IMR-90 (cell line): ENCODE measurements at regions of chr6 and their contacts with region 1.

Region 1: GRCh38 chr6:91081452-91082067 is 494.7 kb upstream of the MAP3K7 start:
- DNase-seq: peak; percentile 52
- ATAC-seq: peak; percentile 59; the same call in 1 of the 2 replicates
- H3K4me3 ChIP-seq: no peak overlapping the region
- H3K27ac ChIP-seq: no peak overlapping the region
- H3K4me1 ChIP-seq: peaks cover 2% of the 10 kb centered on the region; the same call in 1 of the 2 replicates
- H3K27me3 ChIP-seq: no peaks in the 10 kb centered on the region
- CTCF ChIP-seq: peak; percentile 68
- POLR2A ChIP-seq: no peak
- RAD21 ChIP-seq: peak; percentile 71

Region 2: GRCh38 chr6:90701146-90701781 is 380.3 kb before region 1 on chr6:
- CTCF ChIA-PET with region 1: no interaction called
- POLR2A ChIA-PET with region 1: no interaction called
- dilution Hi-C with region 1: no loop called
- in situ Hi-C with region 1: no loop called
- intact Hi-C with region 1: no loop called
- DNase-seq: no peak
- ATAC-seq: no peak
- H3K4me3 ChIP-seq: no peak overlapping the region
- H3K27ac ChIP-seq: no peak overlapping the region
- H3K4me1 ChIP-seq: no peaks in the 10 kb centered on the region
- H3K27me3 ChIP-seq: no peaks in the 10 kb centered on the region
- CTCF ChIP-seq: no peak
- POLR2A ChIP-seq: no peak
- RAD21 ChIP-seq: no peak

Region 3: GRCh38 chr6:90993770-90994169 is 87.8 kb before region 1 on chr6:
- CTCF ChIA-PET with region 1: no interaction called
- POLR2A ChIA-PET with region 1: no interaction called
- dilution Hi-C with region 1: no loop called
- in situ Hi-C with region 1: no loop called
- intact Hi-C with region 1: no loop called
- DNase-seq: no peak
- ATAC-seq: no peak
- H3K4me3 ChIP-seq: no peak overlapping the region
- H3K27ac ChIP-seq: no peak overlapping the region
- H3K4me1 ChIP-seq: no peaks in the 10 kb centered on the region
- H3K27me3 ChIP-seq: no peaks in the 10 kb centered on the region
- CTCF ChIP-seq: no peak
- POLR2A ChIP-seq: no peak
- RAD21 ChIP-seq: no peak

Region 4: DNA sequence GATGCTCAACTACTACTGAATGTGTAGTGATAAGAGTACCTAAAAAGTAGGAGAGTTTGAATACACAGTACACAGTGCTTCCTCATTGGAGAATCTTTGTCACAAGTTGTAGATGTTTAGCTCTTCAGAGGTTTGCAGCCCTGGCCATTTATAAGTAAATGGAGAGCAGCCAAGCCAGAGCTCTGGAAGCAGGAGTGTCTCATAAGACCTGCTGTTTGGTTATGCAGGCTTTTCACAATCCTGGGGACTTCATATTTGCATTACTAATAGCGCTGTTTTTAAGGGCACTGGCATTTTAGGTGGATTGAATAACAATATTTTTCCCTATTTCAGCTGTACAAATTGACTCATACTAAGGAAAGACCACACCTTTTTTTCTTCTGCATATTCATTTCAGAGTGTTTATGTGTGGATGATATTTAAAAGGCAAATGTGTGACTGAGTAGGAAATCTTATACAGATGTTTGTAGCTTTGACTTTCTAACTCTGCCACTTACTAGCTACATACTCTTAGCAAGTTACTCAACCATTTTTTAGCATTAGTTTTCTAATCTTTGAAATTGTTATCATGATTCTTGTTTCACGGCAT is 235.8 kb after region 1 on chr6:
- CTCF ChIA-PET with region 1: no interaction called
- POLR2A ChIA-PET with region 1: no interaction called
- dilution Hi-C with region 1: no loop called
- in situ Hi-C with region 1: no loop called
- intact Hi-C with region 1: loop called (anchors 5 kb)
- DNase-seq: peak; percentile 1
- ATAC-seq: peak; percentile 54
- H3K4me3 ChIP-seq: no peak overlapping the region
- H3K27ac ChIP-seq: no peak overlapping the region
- H3K4me1 ChIP-seq: no peaks in the 10 kb centered on the region
- H3K27me3 ChIP-seq: no peaks in the 10 kb centered on the region
- CTCF ChIP-seq: no peak
- POLR2A ChIP-seq: no peak
- RAD21 ChIP-seq: no peak

Region 5: GRCh38 chr6:91438570-91438969 is 357.0 kb after region 1 on chr6:
- CTCF ChIA-PET with region 1: no interaction called
- POLR2A ChIA-PET with region 1: no interaction called
- dilution Hi-C with region 1: no loop called
- in situ Hi-C with region 1: no loop called
- intact Hi-C with region 1: loop called (anchors 5 kb)
- DNase-seq: peak; percentile 84
- ATAC-seq: peak; percentile 78
- H3K4me3 ChIP-seq: no peak overlapping the region
- H3K27ac ChIP-seq: peak overlapping the region; percentile 16; the same call in 1 of the 2 replicates
- H3K4me1 ChIP-seq: peaks cover 21% of the 10 kb centered on the region
- H3K27me3 ChIP-seq: no peaks in the 10 kb centered on the region
- CTCF ChIP-seq: no peak
- POLR2A ChIP-seq: no peak
- RAD21 ChIP-seq: no peak

Region 6: DNA sequence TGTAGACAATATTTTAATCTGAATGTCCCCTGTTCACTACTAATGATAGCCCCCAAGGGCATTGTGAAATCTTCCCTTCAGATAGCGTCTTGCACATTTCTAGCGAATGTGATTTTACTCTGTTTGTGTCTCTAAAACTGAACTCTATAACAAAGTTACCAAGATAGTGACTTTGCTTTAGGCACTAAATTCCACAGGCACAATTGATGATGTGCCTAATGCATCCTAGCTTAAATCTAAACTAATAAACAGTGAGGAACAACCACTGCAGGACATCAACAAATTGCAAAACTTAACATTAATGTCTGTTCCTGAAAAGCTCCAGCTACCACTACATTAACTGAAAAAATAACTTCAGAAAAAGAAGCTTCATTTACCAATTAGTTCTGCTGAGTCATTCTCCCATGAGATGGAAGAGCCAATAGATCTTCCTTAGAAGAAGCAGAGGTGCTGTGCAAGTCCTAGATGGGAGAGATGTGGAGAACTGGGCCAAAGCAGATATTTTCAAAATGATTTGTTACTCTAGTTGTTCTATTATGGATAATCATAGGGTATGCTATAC is 1272.8 kb after region 1 on chr6:
- CTCF ChIA-PET with region 1: no interaction called
- POLR2A ChIA-PET with region 1: no interaction called
- dilution Hi-C with region 1: no loop called
- in situ Hi-C with region 1: no loop called
- intact Hi-C with region 1: no loop called
- DNase-seq: peak; percentile 4
- ATAC-seq: peak; percentile 21; the same call in 1 of the 2 replicates
- H3K4me3 ChIP-seq: no peak overlapping the region
- H3K27ac ChIP-seq: no peak overlapping the region
- H3K4me1 ChIP-seq: no peaks in the 10 kb centered on the region
- H3K27me3 ChIP-seq: no peaks in the 10 kb centered on the region
- CTCF ChIP-seq: no peak
- POLR2A ChIP-seq: no peak
- RAD21 ChIP-seq: no peak

Region 7: DNA sequence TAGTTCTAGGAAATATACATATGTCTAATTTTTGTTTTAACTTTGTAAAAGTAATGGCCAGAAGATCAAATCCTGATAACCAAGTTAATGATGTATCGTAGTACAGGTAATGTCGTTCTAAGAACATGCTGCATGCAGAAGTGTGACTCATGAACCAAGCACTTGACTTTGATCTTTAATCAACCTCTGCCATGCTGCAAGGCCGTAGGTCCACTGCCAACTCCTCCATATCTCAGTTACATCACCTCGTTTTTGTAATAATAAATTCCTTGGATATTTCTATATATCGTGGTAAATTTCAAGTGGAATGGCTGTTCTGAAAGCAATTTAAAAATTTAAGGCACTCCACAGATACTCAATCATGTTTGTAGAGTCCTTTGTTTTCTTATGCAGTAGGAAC is 1566.1 kb after region 1 on chr6:
- CTCF ChIA-PET with region 1: interaction called, 3 read pairs
- POLR2A ChIA-PET with region 1: no interaction called
- dilution Hi-C with region 1: no loop called
- in situ Hi-C with region 1: no loop called
- intact Hi-C with region 1: loop called (anchors 2 kb)
- DNase-seq: no peak
- ATAC-seq: no peak
- H3K4me3 ChIP-seq: no peak overlapping the region
- H3K27ac ChIP-seq: no peak overlapping the region
- H3K4me1 ChIP-seq: no peaks in the 10 kb centered on the region
- H3K27me3 ChIP-seq: no peaks in the 10 kb centered on the region
- CTCF ChIP-seq: no peak
- POLR2A ChIP-seq: no peak
- RAD21 ChIP-seq: no peak